ENCODE measurements at regions of chr11 and their contacts with region 1.

Region 1: GRCh38 chr11:17722000-17722643 is 2.8 kb downstream of the MYOD1 start:
- DNase-seq: peak in 1 of 2 donors; percentile 75
- ATAC-seq: peak in 3 of 4 donors; percentile 16 to 39 (median 27)
- H3K4me3 ChIP-seq: peak overlapping the region; percentile 75
- H3K27ac ChIP-seq: peak overlapping the region; percentile 94
- H3K4me1 ChIP-seq: peaks cover 7% of the 10 kb centered on the region
- H3K27me3 ChIP-seq: peaks cover 0 to 14% (median 0%) of the 10 kb centered on the region in 3 donors
- CTCF ChIP-seq: peak; percentile 57

Region 2: DNA sequence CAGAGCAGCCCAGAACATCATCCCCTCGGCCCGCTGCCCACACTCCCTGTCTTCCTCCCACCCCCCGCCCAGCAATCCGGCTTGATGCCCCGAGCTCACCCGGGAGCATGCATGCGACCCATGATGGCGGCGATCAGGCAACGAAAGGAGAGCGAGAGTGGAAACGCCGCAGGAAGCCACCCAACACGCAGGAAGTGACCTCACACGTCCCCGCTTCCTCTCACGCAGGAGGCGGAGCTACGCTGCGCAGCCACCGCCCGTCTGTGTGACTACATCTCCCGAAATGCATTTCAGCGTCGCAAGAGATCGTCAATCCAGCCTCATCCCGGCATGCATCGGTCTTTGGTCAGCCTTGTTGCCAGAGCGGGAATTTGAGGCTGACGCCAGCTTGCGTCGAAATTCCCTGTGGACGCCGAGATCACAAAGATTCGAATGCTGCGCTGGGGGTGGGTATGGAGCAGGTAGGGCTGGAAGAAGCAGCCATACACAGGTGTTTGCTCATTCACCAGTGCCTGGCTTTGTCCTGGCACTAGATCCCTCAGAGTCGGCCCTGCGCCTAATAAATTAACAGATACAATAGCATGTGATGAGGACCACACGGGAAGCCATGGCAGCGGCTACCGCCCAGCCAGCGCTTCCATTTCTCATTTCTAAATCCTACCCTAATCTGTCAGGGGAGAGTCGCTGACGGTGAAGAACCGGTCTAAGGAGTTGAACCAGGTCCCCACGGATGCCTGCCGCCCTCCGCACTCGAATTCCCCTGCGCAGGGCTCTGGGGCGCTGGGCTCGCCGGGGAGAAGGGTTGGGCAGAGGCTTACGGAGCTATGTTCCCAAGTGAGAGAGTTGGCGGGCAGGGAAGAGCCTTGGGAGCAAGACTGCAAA is 644.4 kb before region 1 on chr11 and contains the start of gene RPS13:
- intact Hi-C with region 1: loop called in 1 of 2 experiments (anchors 10 kb)
- DNase-seq: peak; percentile 96 to 98
- ATAC-seq: peak; percentile 96 to 99 (median 98)
- H3K4me3 ChIP-seq: peak within 1 kb of the TSS; percentile 91
- H3K27ac ChIP-seq: peak within 1 kb of the TSS; percentile 96
- H3K4me1 ChIP-seq: peaks cover 19% of the 10 kb centered on the region
- H3K27me3 ChIP-seq: no peaks in the 10 kb centered on the region
- CTCF ChIP-seq: no peak
- total RNA-seq, gene RPS13: 717 to 1,079 (median 1,007) TPM

Region 3: DNA sequence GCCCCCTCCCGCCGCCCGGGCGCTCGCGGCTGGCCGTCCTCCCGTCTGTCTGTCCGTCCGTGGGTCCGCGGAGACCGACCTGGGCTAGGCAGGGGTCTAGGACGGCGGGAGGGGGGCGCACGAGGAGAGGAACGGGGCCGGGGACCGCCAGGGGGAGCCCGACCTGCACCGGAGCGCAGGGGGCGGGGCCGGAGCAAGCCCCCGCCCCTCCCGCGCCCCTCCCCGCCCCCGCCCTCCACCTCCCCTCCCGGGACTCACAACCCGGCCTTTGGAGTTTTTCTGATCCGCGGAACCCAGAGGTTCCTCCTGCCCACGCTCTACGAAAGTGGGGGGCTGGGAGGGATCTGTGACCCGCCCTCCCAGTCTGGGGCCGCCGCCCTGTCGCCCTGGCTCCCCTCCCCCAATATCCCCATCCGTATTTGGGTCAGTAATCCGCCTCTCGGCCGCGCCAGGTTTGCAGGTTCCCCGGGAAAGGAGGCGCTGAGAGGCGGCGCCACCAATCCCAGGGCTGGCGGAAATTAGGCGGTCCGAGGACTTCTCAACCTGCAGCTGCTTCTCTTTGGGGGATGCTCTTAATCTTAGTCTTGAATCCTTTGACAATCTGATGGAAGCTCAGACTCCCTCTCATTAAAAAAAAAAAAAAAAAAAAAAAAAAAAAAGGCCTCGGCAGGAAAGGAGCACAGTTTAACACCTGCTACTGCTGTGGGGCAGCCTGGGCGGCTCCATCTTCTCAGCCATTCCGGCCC is 332.7 kb before region 1 on chr11:
- intact Hi-C with region 1: loop called in 1 of 2 experiments (anchors 5 kb)
- DNase-seq: peak; percentile 87 to 95
- ATAC-seq: peak; percentile 62 to 77 (median 66)
- H3K4me3 ChIP-seq: peak overlapping the region; percentile 78
- H3K27ac ChIP-seq: peak overlapping the region; percentile 96
- H3K4me1 ChIP-seq: peaks cover 22% of the 10 kb centered on the region
- H3K27me3 ChIP-seq: no peaks in the 10 kb centered on the region
- CTCF ChIP-seq: peak; percentile 73

Region 4: DNA sequence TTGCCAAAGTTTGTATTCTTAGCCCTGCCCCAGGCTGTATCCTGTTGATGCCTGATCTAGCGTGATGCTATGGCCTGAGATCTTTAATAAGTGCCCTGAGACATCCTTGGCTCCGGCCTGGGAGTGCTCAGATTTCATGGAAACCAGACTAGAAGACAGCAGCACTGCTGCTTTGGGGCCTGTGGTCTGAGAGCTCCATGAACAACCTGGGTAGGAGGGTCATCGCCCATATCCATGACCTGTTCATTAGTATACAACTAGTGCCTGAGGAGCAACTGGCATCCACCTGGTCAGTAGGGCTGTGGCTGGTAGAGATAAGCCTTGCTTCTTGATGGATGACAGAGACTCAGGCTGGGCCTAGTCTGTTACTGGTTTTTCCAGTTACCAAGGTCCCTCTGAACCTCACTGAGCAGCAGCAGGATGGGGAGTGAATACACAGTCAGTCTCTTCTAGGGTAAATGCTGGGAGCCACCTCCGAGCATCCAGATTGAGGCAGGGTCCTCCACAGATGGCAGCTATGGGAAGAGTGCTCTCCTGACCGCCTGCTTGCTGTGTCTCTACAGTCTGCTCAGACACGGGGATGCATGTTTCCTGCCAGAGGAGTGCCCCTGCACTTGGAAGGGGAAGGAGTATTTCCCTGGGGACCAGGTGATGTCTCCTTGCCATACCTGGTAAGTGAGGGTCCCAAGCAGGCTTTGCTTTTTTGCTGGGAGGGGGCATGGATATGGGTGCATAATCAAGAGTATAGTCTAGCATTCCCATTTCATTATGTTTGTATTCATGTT is 136.0 kb before region 1 on chr11:
- intact Hi-C with region 1: no loop called
- DNase-seq: no peak
- ATAC-seq: no peak
- H3K4me3 ChIP-seq: no peak overlapping the region
- H3K27ac ChIP-seq: no peak overlapping the region
- H3K4me1 ChIP-seq: no peaks in the 10 kb centered on the region
- H3K27me3 ChIP-seq: peaks cover 0 to 7% (median 0%) of the 10 kb centered on the region in 3 donors
- CTCF ChIP-seq: no peak

Region 5: GRCh38 chr11:17598700-17599459 is 123.2 kb before region 1 on chr11:
- intact Hi-C with region 1: loop called (anchors 2 to 5 kb)
- DNase-seq: peak; percentile 74 to 87
- ATAC-seq: peak; percentile 88 to 96 (median 94)
- H3K4me3 ChIP-seq: no peak overlapping the region
- H3K27ac ChIP-seq: no peak overlapping the region
- H3K4me1 ChIP-seq: no peaks in the 10 kb centered on the region
- H3K27me3 ChIP-seq: no peaks in the 10 kb centered on the region
- CTCF ChIP-seq: peak; percentile 98

Region 6: GRCh38 chr11:17631710-17632365 is 90.3 kb before region 1 on chr11:
- intact Hi-C with region 1: loop called in 1 of 2 experiments (anchors 5 kb)
- DNase-seq: no peak
- ATAC-seq: peak in 2 of 4 donors; percentile 26 to 28
- H3K4me3 ChIP-seq: no peak overlapping the region
- H3K27ac ChIP-seq: no peak overlapping the region
- H3K4me1 ChIP-seq: peaks cover 9% of the 10 kb centered on the region
- H3K27me3 ChIP-seq: no peaks in the 10 kb centered on the region
- CTCF ChIP-seq: no peak

Region 7: DNA sequence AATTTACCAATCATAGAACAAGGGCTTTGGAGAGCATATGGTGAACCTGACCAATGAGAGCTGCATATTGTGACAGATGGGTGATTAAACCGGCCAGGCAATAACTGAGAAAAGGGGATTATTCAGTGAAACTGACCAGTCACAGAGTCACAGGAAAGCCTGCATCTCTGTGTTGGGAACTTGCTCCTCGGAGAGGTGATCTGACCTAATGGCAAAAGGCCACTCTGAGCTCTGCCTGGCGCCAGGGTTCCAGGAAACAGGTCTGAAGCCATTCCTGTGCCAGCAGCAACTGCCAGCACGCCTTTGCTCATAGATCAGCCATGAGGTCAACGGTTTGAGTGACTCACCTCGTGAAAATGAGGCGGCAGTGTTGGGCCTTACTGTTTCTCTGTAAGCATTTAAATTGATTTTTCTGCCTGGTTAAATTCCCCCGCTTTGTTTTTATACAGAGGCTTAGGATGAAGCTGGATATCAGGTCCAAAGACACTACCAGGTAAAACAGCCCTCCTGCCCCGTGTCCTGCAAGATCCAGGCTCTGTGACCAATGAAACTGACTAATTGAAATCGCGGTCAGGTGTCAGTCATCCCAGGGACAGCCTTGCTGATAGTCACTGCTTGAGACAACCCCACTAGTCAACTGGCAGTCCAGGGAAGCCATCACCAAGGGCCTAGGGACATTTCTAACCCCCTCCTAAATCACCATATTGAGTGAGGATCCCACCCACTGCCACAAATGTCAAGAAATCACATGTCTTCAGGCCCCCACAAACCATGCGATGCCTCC is 38.6 kb before region 1 on chr11:
- intact Hi-C with region 1: loop called (anchors 2 to 5 kb)
- DNase-seq: peak; percentile 71 to 82
- ATAC-seq: peak; percentile 69 to 73 (median 70)
- H3K4me3 ChIP-seq: no peak overlapping the region
- H3K27ac ChIP-seq: peak overlapping the region; percentile 88
- H3K4me1 ChIP-seq: peaks cover 52% of the 10 kb centered on the region
- H3K27me3 ChIP-seq: no peaks in the 10 kb centered on the region
- CTCF ChIP-seq: no peak

Region 8: GRCh38 chr11:17703951-17704350 is 18.2 kb before region 1 on chr11:
- intact Hi-C with region 1: no loop called
- DNase-seq: no peak
- ATAC-seq: peak in 1 of 4 donors; percentile 17
- H3K4me3 ChIP-seq: no peak overlapping the region
- H3K27ac ChIP-seq: no peak overlapping the region
- H3K4me1 ChIP-seq: peaks cover 26% of the 10 kb centered on the region
- H3K27me3 ChIP-seq: no peaks in the 10 kb centered on the region
- CTCF ChIP-seq: no peak

Measured in psoas muscle (tissue), 8 donors.